Naive thymus-derived CD4-positive, alpha-beta T cell (primary cell): ENCODE measurements at regions of chr6 and their contacts with region 1.

Region 1: GRCh38 chr6:157021344-157021992 is 244.3 kb downstream of the ARID1B start:
- DNase-seq: peak; percentile 85 to 93 (median 91)
- ATAC-seq: peak; percentile 90
- H3K4me3 ChIP-seq: peak overlapping the region; percentile 79
- H3K4me3 Mint-ChIP-seq: peak overlapping the region; percentile 76 to 98 (median 95)
- H3K27ac ChIP-seq: peak overlapping the region; percentile 100
- H3K27ac Mint-ChIP-seq: peak overlapping the region; percentile 86 to 100 (median 99)
- H3K4me1 ChIP-seq: peaks cover 5 to 21% of the 10 kb centered on the region in 2 donors
- H3K4me1 Mint-ChIP-seq: peaks cover 32 to 82% (median 64%) of the 10 kb centered on the region in 7 donors
- H3K27me3 ChIP-seq: no peaks in the 10 kb centered on the region
- H3K27me3 Mint-ChIP-seq: no peaks in the 10 kb centered on the region

Region 2: DNA sequence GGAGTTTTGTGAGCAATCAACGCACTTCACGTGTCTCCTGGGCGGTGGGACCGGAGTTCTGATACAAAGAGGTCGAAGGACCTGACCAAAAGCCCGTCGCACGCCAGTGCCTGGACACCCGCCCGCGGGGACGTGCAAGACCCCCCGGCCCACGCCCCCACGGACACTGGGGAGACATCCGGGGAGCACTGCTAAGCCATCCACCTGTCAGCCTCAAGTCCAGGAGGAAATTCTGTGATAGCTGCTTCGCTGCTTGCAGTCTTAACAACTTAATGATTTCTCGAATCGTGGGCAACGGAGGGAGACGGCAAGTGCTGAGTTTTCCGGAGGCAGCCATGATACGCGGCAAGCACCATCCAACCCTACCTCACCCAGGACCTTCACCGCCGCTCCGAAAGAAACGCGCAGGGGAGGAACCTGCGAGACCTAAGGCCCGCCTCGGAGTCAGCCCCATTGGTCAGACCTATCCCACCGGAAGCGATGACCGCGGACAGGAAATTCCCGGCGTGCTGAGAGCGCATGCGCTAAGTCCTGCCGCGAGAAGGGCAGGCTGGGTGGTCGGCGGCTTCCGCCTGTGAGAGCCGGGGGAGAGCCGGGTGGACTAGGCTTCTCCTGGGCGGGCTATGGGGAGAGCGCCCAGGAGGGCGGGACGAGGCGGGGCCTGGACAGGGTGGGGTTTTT is 1707.2 kb before region 1 on chr6 and contains the start of gene TFB1M:
- CTCF ChIA-PET with region 1: no interaction called
- POLR2A ChIA-PET with region 1: no interaction called
- intact Hi-C with region 1: loop called (anchors 1 kb)
- DNase-seq: peak; percentile 84 to 98 (median 94)
- ATAC-seq: peak; percentile 96
- H3K4me3 ChIP-seq: peak within 1 kb of the TSS; percentile 86
- H3K4me3 Mint-ChIP-seq: peak within 1 kb of the TSS; percentile 80 to 98 (median 96)
- H3K27ac ChIP-seq: peak within 1 kb of the TSS; percentile 90
- H3K27ac Mint-ChIP-seq: peak within 1 kb of the TSS; percentile 84 to 97 (median 93)
- H3K4me1 ChIP-seq: peaks cover 3 to 5% of the 10 kb centered on the region in 2 donors
- H3K4me1 Mint-ChIP-seq: peaks cover 10 to 48% (median 41%) of the 10 kb centered on the region in 7 donors
- H3K27me3 ChIP-seq: no peaks in the 10 kb centered on the region
- H3K27me3 Mint-ChIP-seq: no peaks in the 10 kb centered on the region
- total RNA-seq, gene TFB1M: 20.5 to 45.4 (median 29.7) TPM

Region 3: DNA sequence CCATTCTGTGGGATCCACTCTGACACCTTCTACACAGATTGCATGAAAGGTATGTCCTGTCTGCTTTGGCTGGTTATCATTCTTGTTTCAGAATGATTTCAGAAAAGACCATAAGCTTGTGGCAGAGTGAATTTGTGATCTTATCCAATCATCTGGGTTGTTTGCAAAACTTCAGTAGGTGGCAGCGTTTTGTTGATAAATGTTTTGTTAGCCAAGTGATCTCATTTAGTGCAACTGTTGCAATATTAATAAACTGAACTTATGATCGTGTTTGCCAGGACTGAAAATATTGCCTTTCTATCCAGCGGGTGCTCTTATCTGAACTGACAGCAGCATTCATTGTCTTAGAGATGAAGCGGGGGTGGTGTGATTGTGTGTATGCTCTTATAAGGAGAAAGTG is 952.6 kb before region 1 on chr6:
- CTCF ChIA-PET with region 1: no interaction called
- POLR2A ChIA-PET with region 1: no interaction called
- intact Hi-C with region 1: no loop called
- DNase-seq: peak in 1 of 9 donors; percentile 9
- ATAC-seq: no peak
- H3K4me3 ChIP-seq: no peak overlapping the region
- H3K4me3 Mint-ChIP-seq: no peak overlapping the region
- H3K27ac ChIP-seq: no peak overlapping the region
- H3K27ac Mint-ChIP-seq: peak overlapping the region in 2 of 9 donors; percentile 4 to 5
- H3K4me1 ChIP-seq: no peaks in the 10 kb centered on the region
- H3K4me1 Mint-ChIP-seq: peaks cover 0 to 5% (median 2%) of the 10 kb centered on the region in 7 donors
- H3K27me3 ChIP-seq: no peaks in the 10 kb centered on the region
- H3K27me3 Mint-ChIP-seq: no peaks in the 10 kb centered on the region

Region 4: DNA sequence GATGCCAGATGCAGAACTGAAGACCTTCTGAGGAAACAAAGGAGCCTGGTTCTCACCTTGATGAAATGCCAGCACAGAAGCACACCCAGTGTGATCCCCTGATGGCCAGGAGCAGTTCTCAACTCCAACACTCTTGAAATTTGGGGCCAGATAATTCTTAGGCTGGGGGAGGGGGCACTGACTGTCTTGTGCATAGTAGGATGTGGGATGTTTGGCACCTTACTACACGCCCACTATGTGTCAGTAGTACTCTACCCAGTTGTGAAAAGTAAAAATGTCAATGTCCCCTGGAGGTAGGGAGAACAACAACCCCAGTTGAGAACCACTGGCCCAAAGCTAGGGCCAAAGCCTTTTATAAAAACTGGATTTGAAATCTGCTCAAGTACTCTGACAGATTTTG is 642.6 kb before region 1 on chr6:
- CTCF ChIA-PET with region 1: no interaction called
- POLR2A ChIA-PET with region 1: interaction called, 3 read pairs
- intact Hi-C with region 1: loop called in 1 of 2 experiments (anchors 1 kb)
- DNase-seq: peak in 6 of 9 donors; percentile 19 to 48 (median 36)
- ATAC-seq: peak; percentile 74
- H3K4me3 ChIP-seq: no peak overlapping the region
- H3K4me3 Mint-ChIP-seq: no peak overlapping the region
- H3K27ac ChIP-seq: no peak overlapping the region
- H3K27ac Mint-ChIP-seq: peak overlapping the region in 6 of 9 donors; percentile 8 to 67 (median 36)
- H3K4me1 ChIP-seq: no peaks in the 10 kb centered on the region
- H3K4me1 Mint-ChIP-seq: peaks cover 0 to 21% (median 0%) of the 10 kb centered on the region in 7 donors
- H3K27me3 ChIP-seq: no peaks in the 10 kb centered on the region
- H3K27me3 Mint-ChIP-seq: peaks cover 0 to 4% (median 0%) of the 10 kb centered on the region in 5 donors

Region 5: DNA sequence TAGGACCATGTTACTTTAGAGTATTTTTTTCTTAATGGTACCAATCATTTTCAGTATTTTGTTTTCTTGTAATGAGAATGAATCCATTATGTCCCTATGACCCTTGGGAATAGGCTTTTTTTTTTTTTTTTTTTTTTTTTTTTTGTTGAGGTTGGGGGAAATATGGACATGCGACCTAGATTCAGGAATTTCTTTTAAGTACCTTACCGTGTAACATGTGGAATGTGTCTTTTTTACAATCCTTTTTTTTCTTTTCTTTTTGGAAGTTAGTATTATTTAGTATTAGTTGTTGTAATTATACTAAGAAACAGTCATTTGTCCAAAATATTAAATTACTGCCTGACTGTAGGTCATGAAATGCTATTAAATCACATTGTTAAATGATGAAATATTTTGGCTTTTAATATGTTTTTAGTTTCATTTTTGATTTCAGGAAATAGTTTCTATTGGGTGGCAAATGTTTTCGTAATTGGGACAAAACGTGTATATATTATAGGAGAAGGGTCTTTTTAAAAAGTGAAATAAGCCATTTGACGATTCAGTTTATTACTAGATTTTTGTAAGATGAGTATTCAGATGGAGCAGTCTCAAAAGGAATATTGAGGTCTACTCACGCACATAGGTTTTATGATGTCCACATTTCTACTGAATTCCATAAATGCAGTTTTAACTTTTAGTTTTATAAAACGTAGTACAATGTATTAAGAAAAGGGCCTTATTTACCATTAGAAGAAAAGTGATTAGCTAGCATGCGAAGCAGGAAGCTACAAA is 239.4 kb before region 1 on chr6:
- CTCF ChIA-PET with region 1: interaction called, 3 read pairs
- POLR2A ChIA-PET with region 1: interaction called, 53 read pairs
- intact Hi-C with region 1: loop called (anchors 1 kb)
- DNase-seq: no peak
- ATAC-seq: no peak
- H3K4me3 ChIP-seq: peak overlapping the region; percentile 58
- H3K4me3 Mint-ChIP-seq: peak overlapping the region; percentile 84 to 93 (median 88)
- H3K27ac ChIP-seq: peak overlapping the region; percentile 79
- H3K27ac Mint-ChIP-seq: peak overlapping the region; percentile 82 to 94 (median 90)
- H3K4me1 ChIP-seq: peaks cover 18 to 22% of the 10 kb centered on the region in 2 donors
- H3K4me1 Mint-ChIP-seq: peaks cover 32 to 60% (median 52%) of the 10 kb centered on the region in 7 donors
- H3K27me3 ChIP-seq: no peaks in the 10 kb centered on the region
- H3K27me3 Mint-ChIP-seq: peaks cover 0 to 2% (median 0%) of the 10 kb centered on the region in 5 donors

Region 6: DNA sequence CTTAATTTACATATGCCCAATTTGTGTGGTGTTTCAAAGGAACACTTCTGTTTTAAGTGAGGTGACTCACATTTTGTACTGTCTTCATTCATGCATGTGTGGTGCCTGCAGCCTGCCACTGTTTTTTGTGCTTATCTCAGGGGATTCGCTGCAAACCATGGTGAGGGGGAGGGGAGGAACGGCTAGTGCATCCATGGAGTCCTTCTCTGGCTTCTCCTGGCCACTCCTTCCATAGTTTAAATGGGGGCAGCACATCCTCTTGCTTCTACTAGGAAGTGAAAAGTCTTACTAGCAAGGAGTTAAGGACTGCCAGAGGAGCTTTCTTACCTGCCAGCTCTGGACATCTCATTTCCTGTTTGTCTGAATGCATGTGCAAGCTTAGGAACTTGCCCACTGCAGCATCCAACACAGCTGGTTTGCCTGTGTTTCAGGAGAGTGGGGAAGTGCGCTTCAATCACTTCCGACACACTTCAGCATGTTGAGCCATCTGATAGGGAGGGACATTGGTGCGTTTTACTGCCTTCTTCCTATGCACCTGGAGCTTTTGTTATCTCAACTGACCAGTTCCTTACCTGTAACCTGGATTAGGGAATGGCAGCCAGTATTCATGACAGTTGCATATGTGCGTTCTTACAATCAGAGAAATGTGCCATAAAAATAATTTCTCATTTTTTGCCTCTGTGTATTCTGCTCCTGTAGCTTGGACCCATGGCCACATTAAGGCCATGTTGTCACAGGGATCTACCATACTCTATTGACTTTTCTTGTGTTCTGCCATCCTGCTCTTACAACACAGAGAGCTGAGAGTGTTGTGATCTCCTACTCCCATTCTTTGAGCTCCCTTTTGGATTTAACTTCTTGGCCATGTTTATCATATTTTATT is 33.0 kb before region 1 on chr6:
- CTCF ChIA-PET with region 1: no interaction called
- POLR2A ChIA-PET with region 1: interaction called, 10 read pairs
- intact Hi-C with region 1: no loop called
- DNase-seq: no peak
- ATAC-seq: peak; percentile 42
- H3K4me3 ChIP-seq: no peak overlapping the region
- H3K4me3 Mint-ChIP-seq: peak overlapping the region in 8 of 10 donors; percentile 14 to 51 (median 31)
- H3K27ac ChIP-seq: no peak overlapping the region
- H3K27ac Mint-ChIP-seq: peak overlapping the region; percentile 16 to 73 (median 49)
- H3K4me1 ChIP-seq: peaks cover 0 to 23% of the 10 kb centered on the region in 2 donors
- H3K4me1 Mint-ChIP-seq: peaks cover 36 to 81% (median 76%) of the 10 kb centered on the region in 7 donors
- H3K27me3 ChIP-seq: no peaks in the 10 kb centered on the region
- H3K27me3 Mint-ChIP-seq: no peaks in the 10 kb centered on the region

Region 7: GRCh38 chr6:158168040-158168289 is 1146.5 kb after region 1 on chr6 and contains the start of gene SERAC1:
- CTCF ChIA-PET with region 1: no interaction called
- POLR2A ChIA-PET with region 1: no interaction called
- intact Hi-C with region 1: loop called in 1 of 2 experiments (anchors 5 kb)
- DNase-seq: no peak
- ATAC-seq: peak; percentile 59
- H3K4me3 ChIP-seq: peak within 1 kb of the TSS; percentile 88
- H3K4me3 Mint-ChIP-seq: peak within 1 kb of the TSS; percentile 81 to 96 (median 96)
- H3K27ac ChIP-seq: peak within 1 kb of the TSS; percentile 96
- H3K27ac Mint-ChIP-seq: peak within 1 kb of the TSS; percentile 90 to 99 (median 98)
- H3K4me1 ChIP-seq: peaks cover 0 to 5% of the 10 kb centered on the region in 2 donors
- H3K4me1 Mint-ChIP-seq: peaks cover 14 to 46% (median 27%) of the 10 kb centered on the region in 7 donors
- H3K27me3 ChIP-seq: no peaks in the 10 kb centered on the region
- H3K27me3 Mint-ChIP-seq: no peaks in the 10 kb centered on the region
- total RNA-seq, gene SERAC1: 2.4 to 5.4 (median 4.6) TPM